ENCODE measurements at regions of chr6 and their contacts with region 1.

Region 1: GRCh38 chr6:68634726-68635411 is at the start of gene ADGRB3:
- DNase-seq: peak; percentile 86 to 98 (median 96)

Region 2: GRCh38 chr6:68559070-68559469 is 75.8 kb before region 1 on chr6:
- intact Hi-C with region 1: loop called (anchors 5 kb)
- DNase-seq: peak in 14 of 42 donors; percentile 4 to 59 (median 29)

Region 3: DNA sequence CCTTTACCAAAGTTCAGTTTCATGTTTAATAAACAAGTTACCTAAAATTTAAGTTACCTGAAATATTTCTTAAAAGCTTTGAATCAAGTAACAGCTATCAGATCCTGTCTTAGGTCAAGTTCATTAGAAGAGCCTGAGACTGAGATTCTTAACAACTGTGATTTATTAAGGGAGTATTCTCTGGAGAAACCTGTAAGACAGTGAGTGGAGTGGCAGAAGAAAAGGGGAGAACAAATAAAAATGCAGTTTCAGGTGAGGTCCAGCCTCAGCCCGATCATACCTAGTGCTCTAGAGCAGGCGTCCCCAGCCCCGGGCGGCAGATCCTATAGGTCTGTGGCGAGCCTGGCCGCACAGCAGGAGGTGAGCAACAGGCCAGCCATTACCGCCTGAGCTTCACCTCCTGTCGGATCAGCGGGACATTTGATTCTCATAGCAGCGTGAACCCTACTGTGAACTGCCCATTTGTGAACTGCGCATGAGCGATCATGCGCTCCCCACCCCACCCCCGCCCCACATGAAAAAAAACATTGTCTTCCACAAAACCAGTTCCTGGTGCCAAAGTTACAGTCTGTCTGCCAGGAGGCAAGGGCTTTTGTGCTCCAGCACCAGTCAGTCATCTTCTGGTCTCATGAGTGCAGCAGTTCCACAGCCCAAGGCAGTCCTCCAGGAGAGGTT is 59.0 kb before region 1 on chr6:
- intact Hi-C with region 1: loop called (anchors 5 kb)
- DNase-seq: peak in 41 of 42 donors; percentile 10 to 81 (median 55)

Region 4: DNA sequence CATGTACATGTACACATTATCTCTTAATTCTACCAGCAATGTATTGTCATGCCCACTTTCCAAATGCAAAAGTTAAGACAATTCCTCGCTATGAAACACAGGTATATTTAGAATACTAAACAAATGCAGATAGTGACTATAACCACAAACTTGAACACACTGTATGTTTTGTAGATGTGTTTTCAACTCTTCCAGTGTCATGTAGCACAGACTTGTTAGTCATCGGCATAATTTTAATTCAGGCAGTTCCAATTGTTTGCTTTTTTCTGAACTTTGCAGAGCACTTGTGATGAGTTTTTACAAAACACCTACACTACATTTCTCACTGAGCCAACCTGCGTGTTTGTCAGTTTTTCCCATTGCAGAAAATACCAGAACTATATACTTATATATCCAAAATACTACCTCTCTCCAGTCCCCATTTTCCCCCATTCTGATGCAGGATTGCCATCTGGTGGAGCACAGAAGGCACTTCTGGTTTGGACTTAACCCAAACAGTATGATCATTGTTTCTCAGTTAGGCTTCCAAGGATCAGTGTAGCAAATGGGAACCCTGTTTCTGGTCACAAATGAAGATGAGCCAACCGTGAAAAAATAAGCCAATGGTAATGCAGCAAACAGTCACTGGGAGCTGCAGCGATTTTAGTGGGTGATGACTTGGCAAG is 143.6 kb after region 1 on chr6:
- intact Hi-C with region 1: loop called (anchors 2 kb)
- DNase-seq: peak in 40 of 42 donors; percentile 16 to 88 (median 66)

Region 5: DNA sequence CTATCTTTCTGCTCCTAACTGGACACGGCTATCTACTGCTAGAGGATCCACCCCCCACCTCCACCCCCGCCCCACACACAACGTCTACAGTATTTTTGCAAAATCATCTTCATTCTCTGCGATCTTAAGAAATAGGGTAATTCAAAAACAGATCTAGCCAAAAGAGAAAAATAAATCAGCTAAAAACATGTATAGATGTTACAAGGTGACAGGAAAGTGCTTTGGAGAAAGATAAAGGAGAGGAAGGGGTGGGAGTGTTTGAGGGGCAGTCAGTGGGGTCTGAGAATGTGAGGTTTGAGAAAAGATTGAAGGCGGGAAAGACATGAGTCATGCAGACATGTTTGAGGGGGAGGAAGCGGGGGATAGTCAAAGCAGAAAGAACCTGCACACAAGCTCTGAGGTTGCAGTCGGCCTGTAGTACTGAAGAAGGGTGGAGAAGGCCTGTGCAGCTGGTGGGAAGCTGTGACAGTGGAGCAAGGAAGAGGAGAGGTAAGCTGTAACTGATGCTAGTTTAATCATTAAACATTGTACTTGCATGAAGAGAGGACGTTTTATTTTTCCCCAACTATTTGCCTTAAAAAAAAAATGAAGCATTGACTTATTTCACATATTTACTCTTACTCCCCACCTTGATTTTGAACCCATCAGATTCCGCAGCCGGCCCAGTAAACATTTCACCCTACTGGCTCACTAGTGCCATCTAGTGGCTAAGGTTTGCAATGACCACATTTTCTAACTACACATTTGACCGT is 332.9 kb after region 1 on chr6:
- intact Hi-C with region 1: loop called (anchors 5 kb)
- DNase-seq: peak in 41 of 42 donors; percentile 10 to 88 (median 61)

Region 6: GRCh38 chr6:69232911-69233448 is 598.1 kb after region 1 on chr6:
- intact Hi-C with region 1: loop called (anchors 10 kb)
- DNase-seq: peak; percentile 54 to 90 (median 80)